ENCODE measurements at regions of chr15 and their contacts with region 1.

Region 1: DNA sequence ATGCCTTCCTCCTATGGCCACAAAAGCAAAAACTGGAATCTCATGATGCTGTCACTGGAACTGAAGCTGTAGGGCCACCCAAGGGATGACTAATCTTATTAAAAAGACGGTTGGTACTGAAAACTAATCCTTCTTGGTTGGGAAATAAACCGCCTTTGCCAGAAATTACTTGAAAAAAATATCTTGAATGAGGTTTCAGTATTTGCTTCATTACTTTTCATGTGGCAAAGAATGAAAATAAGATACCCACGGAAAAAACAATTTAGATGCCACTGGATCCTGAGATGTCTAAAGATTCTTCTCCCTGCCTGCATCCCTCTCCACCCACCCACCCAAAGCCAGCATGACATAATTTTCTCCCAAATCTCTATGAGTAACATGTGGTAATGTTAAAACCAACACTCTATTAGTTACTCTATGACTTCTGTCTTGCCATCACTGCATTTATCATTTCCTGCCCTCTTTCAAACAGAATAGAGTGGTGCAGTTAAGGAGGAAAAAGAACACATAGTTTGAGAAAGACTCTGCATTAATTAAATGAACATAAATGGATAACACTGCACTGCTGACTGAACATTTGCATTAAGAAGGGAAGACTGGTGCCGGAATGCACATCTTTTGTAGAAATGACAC is 111.8 kb upstream of the DPH6 start:
- DNase-seq: no peak
- H3K4me3 Mint-ChIP-seq: no peak overlapping the region
- H3K27ac Mint-ChIP-seq: no peak overlapping the region
- H3K4me1 Mint-ChIP-seq: peaks cover 4% of the 10 kb centered on the region
- H3K27me3 Mint-ChIP-seq: peaks cover 9% of the 10 kb centered on the region

Region 2: GRCh38 chr15:34993877-34994276 is 663.9 kb before region 1 on chr15:
- intact Hi-C with region 1: loop called (anchors 5 kb)
- DNase-seq: peak; percentile 37
- H3K4me3 Mint-ChIP-seq: peak overlapping the region; percentile 51
- H3K27ac Mint-ChIP-seq: peak overlapping the region; percentile 88
- H3K4me1 Mint-ChIP-seq: peaks cover 39% of the 10 kb centered on the region
- H3K27me3 Mint-ChIP-seq: peaks cover 7% of the 10 kb centered on the region

Region 3: DNA sequence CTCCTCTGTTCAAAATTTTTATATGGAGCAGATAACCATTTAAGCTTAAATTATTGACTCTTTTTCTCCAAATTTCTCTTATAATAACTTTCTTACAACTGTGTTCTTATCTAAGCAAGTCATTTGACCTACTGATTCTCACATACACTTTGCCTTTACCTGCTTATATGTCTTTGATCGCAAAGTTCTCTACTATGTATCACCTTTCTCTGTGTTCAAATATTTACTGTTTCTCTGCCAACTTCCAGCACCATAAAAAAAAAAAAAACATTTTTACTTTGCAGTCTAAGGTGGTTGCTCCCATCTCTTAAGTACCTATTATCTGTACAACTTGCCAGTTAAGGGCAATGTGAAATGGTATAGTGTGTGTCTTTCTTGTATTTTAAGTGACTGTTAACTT is 11.0 kb before region 1 on chr15:
- intact Hi-C with region 1: no loop called
- DNase-seq: no peak
- H3K4me3 Mint-ChIP-seq: no peak overlapping the region
- H3K27ac Mint-ChIP-seq: no peak overlapping the region
- H3K4me1 Mint-ChIP-seq: no peaks in the 10 kb centered on the region
- H3K27me3 Mint-ChIP-seq: peaks cover 2% of the 10 kb centered on the region

Region 4: DNA sequence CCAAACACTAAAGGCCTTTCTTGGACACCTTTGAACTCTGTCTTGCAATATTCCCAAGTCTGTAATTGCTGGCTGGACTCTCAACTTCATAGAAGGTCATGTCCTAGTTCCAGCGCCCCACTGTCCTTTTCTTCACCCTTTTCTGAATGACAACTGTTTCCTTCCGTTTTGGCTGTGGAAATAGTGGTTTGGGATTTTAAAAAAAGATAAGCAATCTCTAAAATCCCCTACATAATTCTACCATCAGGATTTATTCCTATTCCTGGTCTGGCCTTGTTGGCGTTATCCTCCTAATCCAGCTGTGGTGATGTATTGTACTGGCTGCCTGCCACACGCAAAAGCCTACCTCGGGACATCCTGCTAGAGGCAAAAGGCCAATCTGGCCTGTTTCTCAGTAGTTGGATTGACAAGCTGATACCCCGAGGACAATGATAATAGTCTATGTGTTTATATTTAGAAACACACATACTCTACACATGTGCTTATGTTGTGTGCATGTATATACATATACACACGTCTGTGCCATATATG is 328.5 kb after region 1 on chr15:
- intact Hi-C with region 1: no loop called
- DNase-seq: no peak
- H3K4me3 Mint-ChIP-seq: no peak overlapping the region
- H3K27ac Mint-ChIP-seq: no peak overlapping the region
- H3K4me1 Mint-ChIP-seq: no peaks in the 10 kb centered on the region
- H3K27me3 Mint-ChIP-seq: no peaks in the 10 kb centered on the region

Measured in activated T-helper 2 cell treated with anti-CD3 and anti-CD28 coated beads, Interferon-gamma antibody, Interleukin-2, Interleukin-4, amounts not matched to agents 10 μg/mL and 5 μg/mL and 100 μg/mL, durations not matched to agents 14 hours and 24 hours and 36 hours (primary cell).